ENCODE measurements at regions of chr16 and their contacts with region 1.

Region 1: DNA sequence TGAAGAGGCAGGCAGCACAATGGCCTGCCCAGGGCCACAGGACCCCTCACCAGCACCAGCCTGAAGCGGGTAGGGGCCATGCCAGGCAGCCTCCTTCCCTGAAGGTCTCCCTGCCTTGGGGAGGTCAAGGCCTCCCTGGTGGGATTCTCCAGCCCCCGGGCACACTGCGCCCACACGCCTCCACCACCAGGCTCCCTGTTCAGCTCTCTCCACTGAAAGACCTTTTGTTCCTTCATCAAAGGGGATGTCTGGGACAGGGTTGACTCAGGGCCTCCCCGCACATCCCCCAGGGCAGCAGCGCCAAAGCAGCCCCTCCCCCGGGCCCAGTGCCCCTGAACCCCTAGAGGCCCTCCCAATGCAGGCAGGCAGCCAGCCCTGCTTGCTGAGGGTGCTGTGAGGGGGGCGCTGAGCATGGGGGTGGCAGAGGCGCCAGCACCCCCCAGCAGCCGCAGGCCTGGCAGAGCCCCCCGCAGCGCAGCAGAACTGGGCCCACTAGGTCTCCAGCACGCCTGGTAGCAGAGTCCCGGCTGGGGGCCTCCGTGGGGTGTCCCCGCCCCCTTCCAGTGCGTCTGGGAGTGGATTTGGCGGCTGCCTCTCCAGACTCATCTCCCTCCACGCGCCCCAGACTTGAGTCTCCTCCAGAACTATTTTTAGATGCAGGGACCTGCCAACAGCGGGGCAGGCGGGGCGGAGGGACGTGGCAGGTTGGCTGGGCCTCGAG is 13.1 kb downstream of the BCAR1 start:
- DNase-seq: peak; percentile 69
- H3K4me3 ChIP-seq: peak overlapping the region; percentile 8
- CTCF ChIP-seq: no peak

Region 2: DNA sequence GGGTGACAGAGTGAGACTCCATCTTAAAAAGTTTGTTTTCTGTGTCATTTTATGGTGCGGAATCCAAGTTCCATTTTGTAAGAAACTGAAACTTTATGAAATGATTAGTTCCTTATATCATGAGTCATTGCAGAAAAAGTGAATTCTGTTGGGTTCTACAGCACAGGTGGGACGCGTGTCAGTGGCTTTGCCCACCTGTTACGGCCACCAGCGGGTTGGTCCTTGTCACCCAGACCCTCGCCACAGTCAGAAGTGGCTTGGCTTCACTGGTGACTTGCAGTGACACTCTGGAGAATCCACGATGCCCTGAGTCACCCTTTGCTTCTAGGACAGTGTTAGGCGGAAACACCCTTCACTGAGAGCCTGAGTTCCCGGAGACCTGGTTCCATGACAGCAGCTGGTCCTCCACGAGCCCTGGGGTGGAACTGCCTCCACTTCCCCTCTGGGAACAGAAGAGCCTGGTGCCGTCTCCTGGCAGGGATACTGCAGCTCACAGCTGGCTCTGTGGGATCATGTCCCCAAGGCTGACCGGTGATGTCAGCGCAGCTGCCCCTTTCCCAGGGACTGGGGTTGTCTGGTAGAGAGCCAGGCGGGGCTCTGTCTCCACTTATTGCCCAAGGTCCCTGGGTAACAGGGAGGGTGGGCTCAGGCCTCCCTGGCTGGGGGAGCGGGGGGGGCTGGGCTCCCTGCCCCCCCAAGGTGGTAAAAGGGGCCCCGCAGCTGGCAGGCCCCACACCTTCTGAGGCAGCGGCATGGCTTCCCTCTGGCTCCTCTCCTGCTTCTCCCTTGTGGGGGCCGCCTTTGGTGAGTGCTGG is 19.8 kb before region 1 on chr16 and contains the start of gene CTRB1:
- CTCF ChIA-PET with region 1: interaction called, 13 read pairs
- POLR2A ChIA-PET with region 1: no interaction called
- DNase-seq: no peak
- H3K4me3 ChIP-seq: no peak within 1 kb of the TSS
- CTCF ChIP-seq: no peak

Region 3: DNA sequence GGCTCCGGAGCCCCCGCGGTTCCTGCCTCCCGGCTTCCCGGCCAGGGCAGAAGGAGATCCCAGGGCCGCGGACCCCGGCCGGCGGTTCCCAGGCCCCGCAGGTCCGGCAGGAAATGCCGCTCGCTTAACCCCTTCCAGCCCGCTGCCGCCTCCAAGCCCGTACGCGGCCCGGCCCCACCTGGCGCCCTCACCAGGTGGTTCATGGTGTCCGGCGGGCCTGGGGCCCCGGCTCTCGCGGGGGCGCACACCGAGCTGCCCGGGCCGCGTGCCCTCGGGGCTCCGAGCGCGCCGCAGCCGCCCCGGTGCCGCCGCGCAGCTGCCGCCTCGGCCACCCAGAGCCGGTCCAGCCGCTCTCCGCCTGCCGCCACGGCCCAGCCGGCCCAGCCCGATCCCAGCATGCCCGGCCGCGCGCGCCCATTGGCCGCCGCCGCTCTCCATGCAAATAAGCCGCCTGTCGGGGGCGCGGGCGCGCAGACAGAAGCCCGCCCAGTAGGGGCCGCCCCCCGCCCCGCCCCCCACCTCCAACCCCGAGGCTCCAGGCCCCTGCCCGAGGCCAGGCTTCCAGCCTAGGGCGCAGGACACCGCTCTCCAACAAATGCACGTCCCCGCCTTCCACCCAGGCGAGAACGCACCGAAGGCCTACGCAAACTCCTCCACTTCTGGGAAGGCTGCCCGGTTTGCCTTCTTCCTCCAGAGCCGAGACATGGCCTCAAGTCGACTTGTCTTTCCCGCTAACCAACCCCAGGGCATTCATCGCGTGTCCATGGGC is 13.2 kb after region 1 on chr16 and contains the start of gene BCAR1:
- CTCF ChIA-PET with region 1: interaction called, 29 read pairs
- POLR2A ChIA-PET with region 1: interaction called, 9 read pairs
- DNase-seq: peak; percentile 71
- H3K4me3 ChIP-seq: peak within 1 kb of the TSS; percentile 84
- CTCF ChIP-seq: no peak

Region 4: GRCh38 chr16:75385507-75386152 is 147.3 kb after region 1 on chr16:
- CTCF ChIA-PET with region 1: interaction called, 221 read pairs
- POLR2A ChIA-PET with region 1: no interaction called
- DNase-seq: peak; percentile 71
- H3K4me3 ChIP-seq: no peak overlapping the region
- CTCF ChIP-seq: peak; percentile 26

Region 5: DNA sequence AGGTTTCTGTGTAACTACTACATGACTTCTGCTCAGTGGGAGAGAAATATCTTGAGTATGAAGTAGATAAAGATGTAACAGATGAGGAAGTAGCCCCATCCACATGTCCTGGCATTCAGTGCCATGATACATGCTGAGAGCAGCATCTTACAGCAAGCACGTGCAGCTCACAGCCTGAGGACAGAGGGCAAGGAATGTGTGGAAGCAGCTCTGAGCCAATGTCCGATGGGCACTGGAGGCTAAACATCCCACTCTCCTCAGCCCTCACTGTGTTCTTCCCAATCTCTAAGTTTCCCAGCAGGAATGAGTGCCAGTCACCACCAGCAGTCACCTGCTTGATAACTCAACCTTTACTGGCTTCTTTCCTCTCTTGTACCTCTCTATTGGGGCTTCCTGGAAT is 154.6 kb after region 1 on chr16:
- CTCF ChIA-PET with region 1: interaction called, 221 read pairs
- POLR2A ChIA-PET with region 1: no interaction called
- DNase-seq: no peak
- H3K4me3 ChIP-seq: no peak overlapping the region
- CTCF ChIP-seq: no peak

Region 6: GRCh38 chr16:75402821-75403475 is 164.7 kb after region 1 on chr16:
- CTCF ChIA-PET with region 1: interaction called, 139 read pairs
- POLR2A ChIA-PET with region 1: no interaction called
- DNase-seq: no peak
- H3K4me3 ChIP-seq: no peak overlapping the region
- CTCF ChIP-seq: peak; percentile 39